ENCODE measurements at regions of chr7 and their contacts with region 1.

Region 1: GRCh38 chr7:63931985-63932577 is 66.6 kb upstream of the ZNF722 start:
- DNase-seq: no peak
- ATAC-seq: no peak
- H3K4me3 Mint-ChIP-seq: no peak overlapping the region
- H3K27ac Mint-ChIP-seq: no peak overlapping the region
- H3K4me1 Mint-ChIP-seq: no peaks in the 10 kb centered on the region
- H3K27me3 Mint-ChIP-seq: no peaks in the 10 kb centered on the region

Region 2: DNA sequence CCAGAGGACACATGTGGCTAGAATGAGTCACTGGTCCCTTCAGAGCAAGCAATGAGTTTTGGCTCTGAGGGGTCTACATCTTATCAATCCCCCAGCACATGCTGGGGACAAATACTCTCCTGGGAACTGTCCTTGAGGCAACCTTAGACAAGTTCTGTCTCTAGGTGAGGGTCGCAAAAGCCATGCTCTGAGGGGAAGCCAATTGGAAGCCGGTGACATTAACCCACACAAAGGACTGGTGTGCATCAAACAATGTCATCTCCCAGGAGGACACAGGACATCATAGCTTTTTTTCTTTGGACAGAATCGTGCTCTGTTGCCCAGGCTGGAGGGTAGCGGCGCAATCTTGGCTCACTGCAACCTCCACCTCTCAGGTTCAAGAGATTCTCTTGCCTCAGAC is 45.0 kb before region 1 on chr7:
- CTCF ChIA-PET with region 1: no interaction called
- POLR2A ChIA-PET with region 1: no interaction called
- intact Hi-C with region 1: loop called in 1 of 2 experiments (anchors 10 kb)
- DNase-seq: no peak
- ATAC-seq: no peak
- H3K4me3 Mint-ChIP-seq: no peak overlapping the region
- H3K27ac Mint-ChIP-seq: no peak overlapping the region
- H3K4me1 Mint-ChIP-seq: no peaks in the 10 kb centered on the region
- H3K27me3 Mint-ChIP-seq: peaks cover 3% of the 10 kb centered on the region